Motor neuron (in vitro differentiated cells): ENCODE measurements at regions of chr22 and their contacts with region 1.

Region 1: DNA sequence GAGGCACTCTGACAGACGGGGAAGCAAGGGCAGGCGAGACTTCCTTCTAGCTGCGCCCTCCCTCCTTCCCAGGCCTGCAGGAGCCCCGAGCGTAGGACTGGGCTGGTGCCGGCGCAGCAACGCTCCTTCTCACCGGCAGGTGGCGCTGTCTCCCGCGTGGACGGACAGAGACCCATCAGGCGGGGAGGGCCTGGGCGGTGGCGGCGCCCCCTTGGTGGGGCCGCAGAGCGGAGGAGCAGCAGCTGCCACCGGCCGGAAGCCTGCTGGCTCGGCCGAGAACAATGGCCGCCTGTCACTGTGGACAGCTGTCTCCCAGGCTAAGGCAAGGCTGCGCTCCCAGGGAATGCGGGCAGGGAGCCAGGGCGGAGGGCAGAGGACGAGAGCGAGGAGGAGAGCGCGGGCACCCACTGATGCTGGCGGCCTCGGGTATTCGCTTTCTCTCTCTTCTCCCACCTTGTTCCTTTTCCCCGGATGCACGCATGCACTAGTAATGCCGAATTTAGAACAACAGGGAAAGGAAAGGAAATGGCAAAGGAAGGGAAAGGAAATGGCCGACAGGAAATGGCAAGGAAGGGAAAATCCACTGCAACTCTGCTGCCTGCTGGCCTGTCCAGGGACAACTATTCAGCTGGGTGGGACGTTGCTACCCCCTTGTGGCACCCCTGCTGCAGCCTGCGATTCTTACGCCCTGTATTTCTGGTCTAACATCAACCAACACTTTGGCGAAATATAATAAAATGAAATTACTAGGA is 14.4 kb downstream of the PPM1F start:
- ATAC-seq: peak; percentile 82 to 97 (median 94)
- H3K4me3 ChIP-seq: peak overlapping the region; percentile 33 to 44 (median 35)
- H3K27ac ChIP-seq: peak overlapping the region; percentile 93 to 94
- H3K4me1 ChIP-seq: peaks cover 14 to 18% of the 10 kb centered on the region in 2 donors

Region 2: DNA sequence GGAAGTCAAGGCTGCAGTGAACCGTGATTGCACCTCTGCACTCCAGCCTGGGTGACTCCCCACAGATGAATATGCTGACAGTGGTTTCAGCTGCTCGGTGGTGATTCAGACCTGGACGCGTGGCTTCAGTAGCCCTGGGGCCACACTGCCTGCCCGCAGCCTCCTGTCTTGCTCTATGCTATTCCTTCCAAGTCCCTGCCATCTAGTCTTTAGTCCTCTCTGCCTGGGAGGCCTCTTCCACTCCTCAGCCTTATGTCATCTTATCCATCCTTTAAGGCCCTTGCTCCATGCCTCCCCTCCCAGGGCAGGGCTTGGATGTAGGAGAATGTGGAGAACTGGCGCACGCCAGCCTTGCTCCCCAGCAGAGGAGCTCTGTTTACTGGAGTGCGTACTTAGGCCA is 331.5 kb before region 1 on chr22:
- in situ Hi-C with region 1: no loop called
- ATAC-seq: peak in 3 of 8 experiments; percentile 41 to 97 (median 93)
- H3K4me3 ChIP-seq: no peak overlapping the region
- H3K27ac ChIP-seq: peak overlapping the region in 1 of 2 donors; percentile 31
- H3K4me1 ChIP-seq: no peaks in the 10 kb centered on the region

Region 3: DNA sequence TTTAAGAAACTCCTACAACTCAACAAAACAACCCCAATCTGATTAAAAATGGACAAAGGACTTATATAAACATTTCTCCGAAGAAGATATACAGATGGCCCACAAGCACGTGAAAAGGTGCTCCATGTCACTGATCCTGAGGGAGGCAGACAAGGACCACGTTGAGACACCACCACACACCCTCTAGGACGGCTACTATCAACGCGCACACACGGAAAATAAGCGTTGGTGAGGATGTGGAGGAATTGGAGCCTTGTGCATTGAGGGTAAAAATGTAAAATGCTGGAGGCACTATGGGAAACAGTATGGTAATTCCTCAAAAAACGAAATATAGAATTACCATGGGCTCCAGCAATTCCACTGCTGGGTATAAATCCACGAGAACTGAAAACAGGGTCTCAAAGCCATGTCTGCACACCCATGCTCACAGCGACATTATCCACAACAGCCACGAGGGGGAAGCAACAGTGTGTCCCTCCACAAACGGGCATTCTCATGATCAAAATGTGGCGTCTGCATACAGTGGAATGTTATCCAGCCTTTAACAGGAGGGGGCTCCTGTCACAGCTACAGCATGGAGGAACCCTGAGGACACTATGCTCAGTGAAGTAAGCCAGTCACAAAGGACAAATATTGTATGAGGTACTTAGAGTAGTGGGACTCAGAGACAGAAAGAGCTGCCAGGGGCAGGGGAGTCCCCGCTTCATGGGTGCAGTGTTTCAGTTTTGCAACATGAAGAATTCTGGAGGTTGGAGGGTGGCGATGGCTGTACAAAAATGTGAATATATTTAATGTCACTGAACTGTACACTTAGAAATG is 225.1 kb before region 1 on chr22:
- in situ Hi-C with region 1: loop called in 5 of 9 experiments (anchors 10 to 25 kb)
- ATAC-seq: peak; percentile 91 to 98 (median 95)
- H3K4me3 ChIP-seq: no peak overlapping the region
- H3K27ac ChIP-seq: peak overlapping the region in 1 of 2 donors; percentile 4
- H3K4me1 ChIP-seq: peaks cover 0 to 7% of the 10 kb centered on the region in 2 donors

Region 4: GRCh38 chr22:21726650-21727049 is 211.6 kb before region 1 on chr22:
- in situ Hi-C with region 1: loop called in 5 of 9 experiments (anchors 10 to 25 kb)
- ATAC-seq: peak in 7 of 8 experiments; percentile 73 to 93 (median 87)
- H3K4me3 ChIP-seq: no peak overlapping the region
- H3K27ac ChIP-seq: peak overlapping the region; percentile 13 to 50
- H3K4me1 ChIP-seq: peaks cover 0 to 4% of the 10 kb centered on the region in 2 donors